T-cell (primary cell): ENCODE measurements at regions of chr2 and their contacts with region 1.

Region 1: DNA sequence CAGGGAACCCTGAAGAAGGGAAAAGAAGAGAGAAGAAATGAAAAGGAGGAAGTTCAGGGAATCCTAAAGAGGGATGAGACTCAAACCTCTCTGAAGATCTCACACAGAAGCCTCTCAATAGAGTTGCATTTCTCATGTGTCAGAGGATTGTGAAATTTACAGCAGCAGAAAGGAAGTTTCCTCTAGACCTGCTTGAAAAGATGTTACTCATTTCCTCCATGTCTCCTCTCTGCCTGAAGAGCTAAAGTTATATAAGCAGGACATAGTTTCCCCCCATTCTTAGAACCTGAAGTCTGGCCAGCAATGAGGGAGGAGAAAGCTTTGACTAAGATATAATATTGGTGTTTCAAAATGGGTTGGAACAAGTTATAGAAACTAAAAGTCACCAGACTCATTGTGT is 1155.6 kb downstream of the LRP1B start:
- DNase-seq: no peak
- ATAC-seq: no peak
- H3K4me3 ChIP-seq: no peak overlapping the region
- H3K4me3 Mint-ChIP-seq: no peak overlapping the region
- H3K27ac ChIP-seq: no peak overlapping the region
- H3K27ac Mint-ChIP-seq: no peak overlapping the region
- H3K4me1 ChIP-seq: no peaks in the 10 kb centered on the region
- H3K4me1 Mint-ChIP-seq: no peaks in the 10 kb centered on the region
- H3K27me3 ChIP-seq: no peaks in the 10 kb centered on the region
- H3K27me3 Mint-ChIP-seq: no peaks in the 10 kb centered on the region

Region 2: DNA sequence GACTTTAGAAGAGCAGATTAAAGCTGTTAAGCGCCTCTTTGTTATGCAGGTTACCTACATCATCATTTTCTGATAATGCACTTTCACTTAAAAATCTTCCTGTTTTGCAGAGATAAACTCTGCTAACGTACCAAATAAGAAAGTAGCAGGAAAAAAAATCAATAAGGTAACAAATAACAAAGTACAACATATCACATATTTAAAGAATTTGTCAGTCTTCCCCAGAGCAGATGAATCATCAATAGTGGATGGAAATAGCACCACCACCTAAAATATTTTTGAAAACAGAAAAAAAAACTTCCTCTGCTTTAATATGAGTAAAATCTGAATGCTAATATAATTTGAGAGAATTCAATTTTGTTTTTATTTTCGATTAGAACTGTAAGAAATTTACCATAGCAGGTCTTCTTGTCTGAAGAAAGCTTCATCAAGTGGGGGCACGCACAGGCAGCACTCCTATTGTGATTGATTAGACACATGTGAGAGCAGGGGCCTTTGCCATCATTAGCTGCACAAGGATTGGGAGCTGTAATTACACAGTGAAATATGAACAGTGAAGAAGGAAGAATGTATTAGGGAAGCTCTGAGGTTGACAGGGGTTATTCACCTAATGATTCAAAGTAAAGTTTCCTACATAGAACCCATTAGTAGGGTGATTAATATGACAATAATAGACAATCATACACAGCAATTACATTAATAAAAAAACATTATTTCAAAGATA is 123.8 kb before region 1 on chr2:
- CTCF ChIA-PET with region 1: no interaction called
- POLR2A ChIA-PET with region 1: interaction called in 1 of 2 experiments, 11 read pairs
- DNase-seq: no peak
- ATAC-seq: no peak
- H3K4me3 ChIP-seq: no peak overlapping the region
- H3K4me3 Mint-ChIP-seq: no peak overlapping the region
- H3K27ac ChIP-seq: no peak overlapping the region
- H3K27ac Mint-ChIP-seq: no peak overlapping the region
- H3K4me1 ChIP-seq: no peaks in the 10 kb centered on the region
- H3K4me1 Mint-ChIP-seq: no peaks in the 10 kb centered on the region
- H3K27me3 ChIP-seq: no peaks in the 10 kb centered on the region
- H3K27me3 Mint-ChIP-seq: no peaks in the 10 kb centered on the region

Region 3: GRCh38 chr2:141001750-141002149 is 26.5 kb after region 1 on chr2:
- CTCF ChIA-PET with region 1: no interaction called
- POLR2A ChIA-PET with region 1: no interaction called
- DNase-seq: no peak
- ATAC-seq: no peak
- H3K4me3 ChIP-seq: no peak overlapping the region
- H3K4me3 Mint-ChIP-seq: no peak overlapping the region
- H3K27ac ChIP-seq: no peak overlapping the region
- H3K27ac Mint-ChIP-seq: no peak overlapping the region
- H3K4me1 ChIP-seq: no peaks in the 10 kb centered on the region
- H3K4me1 Mint-ChIP-seq: no peaks in the 10 kb centered on the region
- H3K27me3 ChIP-seq: no peaks in the 10 kb centered on the region
- H3K27me3 Mint-ChIP-seq: no peaks in the 10 kb centered on the region

Region 4: DNA sequence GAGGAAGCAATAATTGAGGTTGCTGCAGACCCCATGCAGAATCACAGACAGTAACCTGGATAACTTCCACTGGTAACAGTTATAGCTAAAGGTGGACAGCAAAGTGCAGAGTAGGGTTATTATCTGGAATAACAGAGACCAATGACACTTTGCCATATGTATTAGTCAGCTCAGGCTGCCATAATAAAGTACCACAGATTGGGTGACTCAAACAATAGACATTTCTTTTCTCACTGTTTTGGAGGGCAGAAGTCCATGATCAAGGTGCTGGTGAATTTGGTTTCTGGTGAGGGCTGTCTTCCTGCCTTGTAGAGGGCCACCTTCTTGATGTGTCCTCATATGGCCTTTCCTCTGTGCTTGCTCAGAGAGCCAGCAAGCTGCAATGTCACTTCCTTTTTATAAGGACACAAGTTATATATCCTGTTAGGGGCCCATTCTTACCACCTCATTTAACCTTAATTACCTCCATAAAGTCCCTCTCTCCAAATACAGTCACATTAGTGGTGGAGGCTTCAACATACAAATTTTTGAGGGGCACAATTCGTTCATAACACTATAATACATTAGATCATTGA is 1346.6 kb after region 1 on chr2:
- CTCF ChIA-PET with region 1: no interaction called
- POLR2A ChIA-PET with region 1: no interaction called
- DNase-seq: no peak
- ATAC-seq: no peak
- H3K4me3 ChIP-seq: no peak overlapping the region
- H3K4me3 Mint-ChIP-seq: no peak overlapping the region
- H3K27ac ChIP-seq: no peak overlapping the region
- H3K27ac Mint-ChIP-seq: no peak overlapping the region
- H3K4me1 ChIP-seq: no peaks in the 10 kb centered on the region
- H3K4me1 Mint-ChIP-seq: no peaks in the 10 kb centered on the region
- H3K27me3 ChIP-seq: no peaks in the 10 kb centered on the region
- H3K27me3 Mint-ChIP-seq: no peaks in the 10 kb centered on the region